ENCODE measurements at regions of chr1 and their contacts with region 1.

Region 1: GRCh38 chr1:89953072-89953626 is 41.8 kb upstream of the ZNF326 start:
- DNase-seq: peak; percentile 83 to 98
- H3K4me3 ChIP-seq: no peak overlapping the region
- H3K27ac ChIP-seq: peak overlapping the region; percentile 94
- H3K4me1 ChIP-seq: peaks cover 73% of the 10 kb centered on the region
- H3K27me3 ChIP-seq: no peaks in the 10 kb centered on the region
- CTCF ChIP-seq: no peak

Region 2: DNA sequence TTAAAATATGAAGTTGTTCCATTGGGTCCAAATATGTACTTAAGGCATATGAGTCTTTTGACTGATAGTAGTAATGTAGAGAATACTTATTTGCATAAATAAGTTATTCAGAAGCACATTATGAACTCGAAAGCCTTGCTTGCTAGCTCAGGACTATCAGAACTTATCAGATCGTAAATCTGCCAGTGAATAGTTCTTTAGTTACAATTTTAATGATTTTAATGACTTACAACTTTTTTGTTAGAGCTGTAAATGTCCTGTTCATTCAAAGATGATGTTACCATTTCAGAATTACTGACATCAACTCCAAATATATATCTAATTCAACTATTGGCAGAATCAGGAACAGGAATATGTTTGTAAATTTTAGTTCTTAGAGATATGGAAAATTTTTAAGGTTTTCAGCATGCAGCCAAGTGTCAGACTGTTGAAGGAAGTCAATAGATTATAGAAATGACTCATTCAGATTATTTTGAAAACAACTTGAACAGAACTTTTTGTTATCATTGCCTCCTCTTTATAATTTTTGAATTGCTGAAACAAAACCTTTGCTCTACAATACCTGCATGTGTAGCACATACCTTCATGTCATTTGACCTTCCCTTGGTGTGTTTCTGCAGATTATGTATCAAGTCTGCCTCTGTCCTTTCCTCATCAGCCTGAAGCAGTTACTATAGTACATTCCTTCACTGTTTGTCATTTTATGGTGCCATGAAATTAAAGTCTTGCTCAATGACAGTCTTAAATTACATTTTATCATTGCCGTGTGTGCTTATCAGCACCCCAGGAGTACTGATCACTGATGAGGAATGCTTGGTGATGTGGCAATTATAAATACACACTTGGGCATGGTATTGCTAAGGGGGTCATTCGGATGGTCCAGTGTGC is 87.4 kb before region 1 on chr1:
- CTCF ChIA-PET with region 1: no interaction called
- POLR2A ChIA-PET with region 1: no interaction called
- intact Hi-C with region 1: loop called (anchors 1 kb)
- DNase-seq: peak; percentile 28 to 100
- H3K4me3 ChIP-seq: peak overlapping the region; percentile 16; the same call in 1 of the 2 replicates
- H3K27ac ChIP-seq: peak overlapping the region; percentile 91
- H3K4me1 ChIP-seq: peaks cover 65% of the 10 kb centered on the region
- H3K27me3 ChIP-seq: no peaks in the 10 kb centered on the region
- CTCF ChIP-seq: no peak

Region 3: GRCh38 chr1:90074137-90074536 is 121.0 kb after region 1 on chr1:
- CTCF ChIA-PET with region 1: no interaction called
- POLR2A ChIA-PET with region 1: no interaction called
- intact Hi-C with region 1: no loop called
- DNase-seq: no peak
- H3K4me3 ChIP-seq: no peak overlapping the region
- H3K27ac ChIP-seq: no peak overlapping the region
- H3K4me1 ChIP-seq: no peaks in the 10 kb centered on the region
- H3K27me3 ChIP-seq: no peaks in the 10 kb centered on the region
- CTCF ChIP-seq: no peak

Measured in PC-9 (cell line).